ENCODE measurements at regions of chr10 and their contacts with region 1.

Region 1: DNA sequence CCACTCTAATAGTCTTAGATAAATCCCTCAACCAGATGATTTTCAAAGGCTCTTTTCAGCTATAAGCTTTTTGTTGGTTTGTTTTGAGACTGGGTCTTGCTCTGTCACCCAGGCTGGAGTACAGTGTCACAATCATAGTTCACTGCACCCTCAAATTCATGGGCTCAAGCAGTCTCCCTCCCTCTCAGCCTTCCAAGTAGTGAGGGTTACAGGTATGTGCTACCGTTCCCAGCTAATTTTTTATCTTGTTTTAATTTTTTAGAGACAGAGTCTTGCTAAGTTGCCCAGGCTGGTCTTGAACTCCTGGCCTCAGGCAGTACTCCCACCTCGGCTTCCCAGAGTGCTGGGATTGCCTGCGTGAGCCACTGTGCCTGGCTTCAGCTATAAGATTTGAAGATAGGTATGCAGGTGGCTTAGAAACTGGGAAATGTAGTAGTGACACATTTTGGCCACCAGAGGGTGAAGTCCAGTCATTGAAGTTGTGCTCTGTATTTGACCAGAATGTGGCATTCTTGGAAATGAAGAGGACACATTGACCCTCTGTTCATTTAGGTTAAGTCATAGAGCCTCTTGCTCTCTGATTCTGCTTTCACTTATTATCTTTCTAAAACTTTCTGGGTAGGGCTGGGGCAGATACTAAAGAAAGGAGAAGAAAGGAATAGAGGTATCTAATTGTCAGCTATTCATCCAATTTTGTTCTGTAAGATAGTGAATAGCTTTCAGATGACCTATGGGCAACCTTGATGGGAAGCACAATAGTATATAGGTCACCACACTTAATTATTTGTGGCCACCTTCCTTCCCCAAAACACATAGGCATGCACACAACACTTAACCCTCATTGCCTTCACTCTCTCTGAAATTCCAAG is 36.0 kb downstream of the R3HCC1L start:
- DNase-seq: peak; percentile 61
- H3K4me3 Mint-ChIP-seq: no peak overlapping the region
- H3K27ac Mint-ChIP-seq: peak overlapping the region; percentile 35
- H3K4me1 Mint-ChIP-seq: no peaks in the 10 kb centered on the region
- H3K27me3 Mint-ChIP-seq: no peaks in the 10 kb centered on the region
- CTCF ChIP-seq: peak; percentile 59

Region 2: DNA sequence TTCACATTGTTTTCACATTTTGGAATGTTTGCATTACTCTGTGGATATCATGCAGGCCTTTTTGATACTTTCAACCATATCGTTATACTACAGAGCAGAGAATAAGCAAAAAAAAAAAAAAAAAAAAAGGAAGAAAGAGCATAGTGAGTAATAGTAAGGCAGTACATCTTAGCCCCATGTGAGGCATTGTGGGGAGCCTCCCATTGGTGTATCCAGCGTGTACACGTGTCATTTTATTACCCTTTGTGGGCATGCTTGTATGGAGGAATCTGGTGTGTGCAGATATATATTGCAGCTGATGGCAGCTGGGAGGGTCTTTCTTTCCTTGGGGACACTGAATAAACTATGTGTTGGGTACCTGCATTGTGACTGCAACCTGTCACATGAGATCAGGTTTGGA is 16.4 kb before region 1 on chr10:
- CTCF ChIA-PET with region 1: interaction called, 13 read pairs
- POLR2A ChIA-PET with region 1: no interaction called
- intact Hi-C with region 1: no loop called
- DNase-seq: no peak
- H3K4me3 Mint-ChIP-seq: no peak overlapping the region
- H3K27ac Mint-ChIP-seq: no peak overlapping the region
- H3K4me1 Mint-ChIP-seq: peaks cover 14% of the 10 kb centered on the region
- H3K27me3 Mint-ChIP-seq: no peaks in the 10 kb centered on the region
- CTCF ChIP-seq: no peak

Region 3: DNA sequence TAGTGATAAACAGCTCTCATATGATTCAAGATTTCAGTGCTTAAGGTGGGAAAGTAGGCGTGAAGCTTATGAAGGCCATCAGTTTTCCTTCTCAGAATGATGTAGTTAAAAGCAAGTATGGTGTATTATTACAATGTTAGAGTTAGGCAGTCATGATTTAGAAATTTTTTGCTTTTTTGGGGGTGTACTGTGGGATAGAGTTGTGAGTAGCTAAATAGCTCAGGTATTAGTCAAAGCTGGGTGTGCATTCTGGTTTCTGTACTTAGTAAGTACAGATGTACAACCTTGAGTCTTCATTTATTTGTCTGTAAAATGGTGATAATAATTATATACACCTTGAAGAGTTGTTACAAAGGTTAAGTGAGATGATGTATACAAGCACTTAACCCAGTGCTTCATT is 16.2 kb after region 1 on chr10:
- CTCF ChIA-PET with region 1: interaction called, 57 read pairs
- POLR2A ChIA-PET with region 1: no interaction called
- intact Hi-C with region 1: no loop called
- DNase-seq: no peak
- H3K4me3 Mint-ChIP-seq: no peak overlapping the region
- H3K27ac Mint-ChIP-seq: no peak overlapping the region
- H3K4me1 Mint-ChIP-seq: peaks cover 13% of the 10 kb centered on the region
- H3K27me3 Mint-ChIP-seq: no peaks in the 10 kb centered on the region
- CTCF ChIP-seq: no peak

Region 4: GRCh38 chr10:98208925-98209324 is 38.4 kb after region 1 on chr10:
- CTCF ChIA-PET with region 1: interaction called, 15 read pairs
- POLR2A ChIA-PET with region 1: interaction called, 3 read pairs
- intact Hi-C with region 1: no loop called
- DNase-seq: no peak
- H3K4me3 Mint-ChIP-seq: no peak overlapping the region
- H3K27ac Mint-ChIP-seq: no peak overlapping the region
- H3K4me1 Mint-ChIP-seq: peaks cover 16% of the 10 kb centered on the region
- H3K27me3 Mint-ChIP-seq: no peaks in the 10 kb centered on the region
- CTCF ChIP-seq: no peak

Region 5: GRCh38 chr10:98314489-98315284 is 144.2 kb after region 1 on chr10:
- CTCF ChIA-PET with region 1: interaction called, 93 read pairs
- POLR2A ChIA-PET with region 1: no interaction called
- intact Hi-C with region 1: loop called (anchors 1 kb)
- DNase-seq: peak; percentile 54
- H3K4me3 Mint-ChIP-seq: no peak overlapping the region
- H3K27ac Mint-ChIP-seq: no peak overlapping the region
- H3K4me1 Mint-ChIP-seq: peaks cover 19% of the 10 kb centered on the region
- H3K27me3 Mint-ChIP-seq: no peaks in the 10 kb centered on the region
- CTCF ChIP-seq: no peak